GM12878 (cell line): ENCODE measurements at regions of chr2 and their contacts with region 1.

Region 1: DNA sequence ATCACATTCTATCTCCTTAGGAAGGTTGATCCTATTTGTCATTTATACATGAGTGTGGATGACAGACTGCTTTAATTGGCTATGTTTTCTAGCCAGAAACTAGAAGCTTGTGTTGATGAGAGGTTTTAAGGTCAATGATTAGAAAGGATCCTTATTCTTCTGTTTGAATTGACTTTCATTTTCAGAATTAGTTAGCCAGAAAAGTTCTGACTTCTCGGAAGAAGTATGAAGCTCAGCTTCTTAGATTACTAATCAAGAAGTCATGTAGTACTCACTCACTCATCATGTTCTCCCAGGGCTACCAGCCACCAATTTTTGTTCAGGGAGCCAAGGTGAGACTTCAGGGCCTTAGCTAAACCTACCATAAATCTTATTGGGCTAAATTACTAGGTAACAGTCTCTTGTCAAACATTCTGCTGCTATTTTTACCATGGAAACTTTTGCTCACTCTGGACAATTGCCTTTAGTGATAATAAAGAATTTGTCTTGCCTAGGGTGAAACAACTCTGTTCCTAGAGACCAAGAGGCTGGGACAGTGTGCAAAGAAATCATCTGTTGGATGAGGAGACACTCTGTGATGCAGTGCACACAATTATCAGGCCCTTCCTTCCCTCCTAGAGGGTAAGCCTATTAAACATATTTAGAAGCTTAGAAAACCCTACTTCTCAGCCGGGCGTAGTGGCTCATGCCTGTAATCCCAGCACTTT is 111.6 kb upstream of the DNMT3A start:
- DNase-seq: peak; percentile 69
- ATAC-seq: peak; percentile 96
- H3K4me3 ChIP-seq: no peak overlapping the region
- H3K27ac ChIP-seq: peak overlapping the region; percentile 94
- H3K4me1 ChIP-seq: peaks cover 18% of the 10 kb centered on the region
- H3K27me3 ChIP-seq: no peaks in the 10 kb centered on the region
- CTCF ChIP-seq: no peak
- EP300 ChIP-seq: no peak
- POLR2A ChIP-seq: no peak
- RAD21 ChIP-seq: no peak

Region 2: GRCh38 chr2:25078171-25079049 is 374.9 kb before region 1 on chr2:
- CTCF ChIA-PET with region 1: no interaction called
- POLR2A ChIA-PET with region 1: no interaction called
- RAD21 ChIA-PET with region 1: no interaction called
- SMC1A ChIA-PET with region 1: no interaction called
- in situ Hi-C with region 1: no loop called
- intact Hi-C with region 1: no loop called
- DNase-seq: no peak
- ATAC-seq: no peak
- H3K4me3 ChIP-seq: no peak overlapping the region
- H3K27ac ChIP-seq: no peak overlapping the region
- H3K4me1 ChIP-seq: peaks cover 8% of the 10 kb centered on the region
- H3K27me3 ChIP-seq: 0 out of 4 replicates have a peak, but pooled peaks cover 0 to 2% of the 10 kb centered on the region in 2 experiments
- CTCF ChIP-seq: no peak
- EP300 ChIP-seq: no peak
- POLR2A ChIP-seq: no peak
- RAD21 ChIP-seq: no peak

Region 3: GRCh38 chr2:25131567-25132298 is 321.6 kb before region 1 on chr2:
- CTCF ChIA-PET with region 1: no interaction called
- POLR2A ChIA-PET with region 1: no interaction called
- RAD21 ChIA-PET with region 1: no interaction called
- SMC1A ChIA-PET with region 1: no interaction called
- in situ Hi-C with region 1: no loop called
- intact Hi-C with region 1: no loop called
- DNase-seq: no peak
- ATAC-seq: no peak
- H3K4me3 ChIP-seq: no peak overlapping the region
- H3K27ac ChIP-seq: no peak overlapping the region
- H3K4me1 ChIP-seq: no peaks in the 10 kb centered on the region
- H3K27me3 ChIP-seq: peaks cover 0 to 5% of the 10 kb centered on the region in 2 experiments; a peak in 3 of 4 replicates
- CTCF ChIP-seq: no peak
- EP300 ChIP-seq: no peak
- POLR2A ChIP-seq: no peak
- RAD21 ChIP-seq: no peak

Region 4: DNA sequence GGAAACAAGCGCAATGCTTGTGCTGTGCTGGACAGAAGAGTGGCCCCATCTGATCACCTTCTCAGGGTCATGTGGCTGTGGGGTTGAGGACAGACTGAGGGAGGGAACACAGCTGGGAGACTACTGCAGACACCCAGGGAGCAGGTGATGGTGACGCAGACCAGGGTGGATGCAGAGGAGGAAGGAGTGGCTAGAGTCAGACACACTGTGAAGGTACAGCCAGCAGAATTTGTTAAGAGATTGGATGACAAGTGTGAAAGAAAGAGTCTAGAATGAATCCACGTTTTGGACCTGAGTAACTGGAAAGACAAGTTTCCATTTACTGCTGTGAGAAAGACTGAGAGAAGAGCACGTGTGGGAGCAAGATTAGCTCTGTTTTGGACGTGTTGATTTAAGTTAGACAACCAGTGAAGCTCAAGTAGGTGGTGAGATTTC is 269.1 kb before region 1 on chr2:
- CTCF ChIA-PET with region 1: no interaction called
- POLR2A ChIA-PET with region 1: no interaction called
- RAD21 ChIA-PET with region 1: no interaction called
- SMC1A ChIA-PET with region 1: no interaction called
- in situ Hi-C with region 1: no loop called
- intact Hi-C with region 1: no loop called
- DNase-seq: no peak
- ATAC-seq: no peak
- H3K4me3 ChIP-seq: no peak overlapping the region
- H3K27ac ChIP-seq: no peak overlapping the region
- H3K4me1 ChIP-seq: no peaks in the 10 kb centered on the region
- H3K27me3 ChIP-seq: no peaks in the 10 kb centered on the region
- CTCF ChIP-seq: no peak
- EP300 ChIP-seq: no peak
- POLR2A ChIP-seq: no peak
- RAD21 ChIP-seq: no peak

Region 5: DNA sequence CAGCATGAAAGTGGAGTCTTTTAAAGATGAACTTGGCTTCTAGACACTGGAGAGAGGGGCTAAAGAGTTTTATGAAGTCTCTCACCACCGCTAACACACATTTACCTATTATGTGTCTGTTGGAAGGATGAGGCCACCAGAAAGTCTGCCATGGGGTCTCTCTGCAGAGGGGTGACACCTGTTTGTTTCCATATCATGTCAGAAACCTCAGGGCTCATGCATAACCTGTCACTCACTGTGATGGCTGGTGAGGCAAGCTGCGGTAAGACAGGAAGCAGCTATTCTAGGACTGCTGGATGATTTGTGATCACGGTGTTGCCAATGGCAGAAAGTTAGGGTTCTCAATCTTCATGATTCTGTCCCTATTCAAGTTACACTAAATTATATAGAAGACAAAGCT is 50.9 kb before region 1 on chr2:
- CTCF ChIA-PET with region 1: interaction called, 3 read pairs
- POLR2A ChIA-PET with region 1: interaction called, 8 read pairs
- RAD21 ChIA-PET with region 1: interaction called, 11 read pairs
- SMC1A ChIA-PET with region 1: interaction called, 5 read pairs
- in situ Hi-C with region 1: no loop called
- intact Hi-C with region 1: no loop called
- DNase-seq: no peak
- ATAC-seq: peak; percentile 57
- H3K4me3 ChIP-seq: peak overlapping the region; percentile 35; the same call in 1 of the 2 replicates
- H3K27ac ChIP-seq: peak overlapping the region; percentile 97
- H3K4me1 ChIP-seq: peaks cover 58% of the 10 kb centered on the region
- H3K27me3 ChIP-seq: no peaks in the 10 kb centered on the region
- CTCF ChIP-seq: no peak
- EP300 ChIP-seq: peak in 1 of 2 experiments; percentile 74; a peak in 2 of 4 replicates
- POLR2A ChIP-seq: peak; percentile 32; the same call in 1 of the 2 replicates
- RAD21 ChIP-seq: no peak

Region 6: GRCh38 chr2:25437881-25438662 is 15.3 kb before region 1 on chr2:
- CTCF ChIA-PET with region 1: interaction called, 6 read pairs
- POLR2A ChIA-PET with region 1: interaction called, 12 read pairs
- RAD21 ChIA-PET with region 1: interaction called, 4 read pairs
- SMC1A ChIA-PET with region 1: interaction called, 15 read pairs
- in situ Hi-C with region 1: no loop called
- intact Hi-C with region 1: no loop called
- DNase-seq: no peak
- ATAC-seq: peak; percentile 52; the same call in 2 of the 3 replicates
- H3K4me3 ChIP-seq: no peak overlapping the region
- H3K27ac ChIP-seq: no peak overlapping the region
- H3K4me1 ChIP-seq: peaks cover 7% of the 10 kb centered on the region; the same call in 1 of the 2 replicates
- H3K27me3 ChIP-seq: no peaks in the 10 kb centered on the region
- CTCF ChIP-seq: no peak
- EP300 ChIP-seq: no peak
- POLR2A ChIP-seq: no peak
- RAD21 ChIP-seq: no peak

Region 7: GRCh38 chr2:25467734-25468133 is 14.4 kb after region 1 on chr2:
- CTCF ChIA-PET with region 1: interaction called, 3 read pairs
- POLR2A ChIA-PET with region 1: interaction called, 15 read pairs
- RAD21 ChIA-PET with region 1: no interaction called
- SMC1A ChIA-PET with region 1: interaction called, 10 read pairs
- in situ Hi-C with region 1: no loop called
- intact Hi-C with region 1: no loop called
- DNase-seq: no peak
- ATAC-seq: no peak
- H3K4me3 ChIP-seq: no peak overlapping the region
- H3K27ac ChIP-seq: no peak overlapping the region
- H3K4me1 ChIP-seq: no peaks in the 10 kb centered on the region
- H3K27me3 ChIP-seq: no peaks in the 10 kb centered on the region
- CTCF ChIP-seq: no peak
- EP300 ChIP-seq: no peak
- POLR2A ChIP-seq: no peak
- RAD21 ChIP-seq: no peak

Region 8: DNA sequence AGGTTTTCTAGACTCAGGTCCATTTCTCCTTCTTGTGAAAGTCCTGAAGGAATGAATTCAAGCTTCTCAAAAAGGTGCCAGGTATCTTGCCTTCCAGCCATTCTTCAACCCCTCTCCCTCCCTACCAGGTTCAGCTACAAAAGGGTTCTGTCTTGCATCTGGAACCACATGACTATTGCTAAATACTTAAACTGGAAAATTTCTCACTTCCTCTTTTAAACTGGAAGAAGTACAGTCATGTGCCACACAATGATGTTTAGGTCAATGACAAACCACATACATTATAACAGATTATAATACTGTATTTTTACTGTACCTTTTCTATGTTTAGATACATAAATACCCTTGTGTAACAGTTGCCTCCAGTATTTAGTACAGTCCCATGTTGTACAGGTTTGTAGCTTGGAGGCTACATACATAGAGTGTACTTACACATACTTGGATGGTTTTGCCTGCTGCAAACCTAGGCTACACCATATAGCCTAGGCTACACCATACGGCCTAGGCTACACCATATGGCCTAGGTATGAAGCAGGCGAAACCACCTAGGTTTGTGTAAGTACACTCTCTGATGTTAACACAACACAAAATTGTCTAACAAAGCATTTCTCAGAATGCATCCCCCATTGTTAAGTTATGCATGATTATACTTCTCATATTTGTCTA is 30.4 kb after region 1 on chr2:
- CTCF ChIA-PET with region 1: interaction called, 4 read pairs
- POLR2A ChIA-PET with region 1: interaction called, 6 read pairs
- RAD21 ChIA-PET with region 1: interaction called, 5 read pairs
- SMC1A ChIA-PET with region 1: interaction called, 18 read pairs
- in situ Hi-C with region 1: no loop called
- intact Hi-C with region 1: no loop called
- DNase-seq: no peak
- ATAC-seq: peak; percentile 90
- H3K4me3 ChIP-seq: no peak overlapping the region
- H3K27ac ChIP-seq: peak overlapping the region; percentile 54
- H3K4me1 ChIP-seq: peaks cover 9% of the 10 kb centered on the region
- H3K27me3 ChIP-seq: no peaks in the 10 kb centered on the region
- CTCF ChIP-seq: no peak
- EP300 ChIP-seq: peak; percentile 59 to 62; a peak in 2 of 4 replicates
- POLR2A ChIP-seq: no peak
- RAD21 ChIP-seq: no peak

Region 9: GRCh38 chr2:25497918-25498407 is 44.6 kb after region 1 on chr2:
- CTCF ChIA-PET with region 1: interaction called, 3 read pairs
- POLR2A ChIA-PET with region 1: interaction called, 4 read pairs
- RAD21 ChIA-PET with region 1: interaction called, 11 read pairs
- SMC1A ChIA-PET with region 1: interaction called, 14 read pairs
- in situ Hi-C with region 1: no loop called
- intact Hi-C with region 1: no loop called
- DNase-seq: no peak
- ATAC-seq: peak; percentile 92
- H3K4me3 ChIP-seq: no peak overlapping the region
- H3K27ac ChIP-seq: peak overlapping the region; percentile 65
- H3K4me1 ChIP-seq: peaks cover 15% of the 10 kb centered on the region
- H3K27me3 ChIP-seq: no peaks in the 10 kb centered on the region
- CTCF ChIP-seq: no peak
- EP300 ChIP-seq: peak; percentile 35 to 60; a peak in 2 of 4 replicates
- POLR2A ChIP-seq: no peak
- RAD21 ChIP-seq: no peak